ENCODE measurements at regions of chr1 and their contacts with region 1.

Region 1: DNA sequence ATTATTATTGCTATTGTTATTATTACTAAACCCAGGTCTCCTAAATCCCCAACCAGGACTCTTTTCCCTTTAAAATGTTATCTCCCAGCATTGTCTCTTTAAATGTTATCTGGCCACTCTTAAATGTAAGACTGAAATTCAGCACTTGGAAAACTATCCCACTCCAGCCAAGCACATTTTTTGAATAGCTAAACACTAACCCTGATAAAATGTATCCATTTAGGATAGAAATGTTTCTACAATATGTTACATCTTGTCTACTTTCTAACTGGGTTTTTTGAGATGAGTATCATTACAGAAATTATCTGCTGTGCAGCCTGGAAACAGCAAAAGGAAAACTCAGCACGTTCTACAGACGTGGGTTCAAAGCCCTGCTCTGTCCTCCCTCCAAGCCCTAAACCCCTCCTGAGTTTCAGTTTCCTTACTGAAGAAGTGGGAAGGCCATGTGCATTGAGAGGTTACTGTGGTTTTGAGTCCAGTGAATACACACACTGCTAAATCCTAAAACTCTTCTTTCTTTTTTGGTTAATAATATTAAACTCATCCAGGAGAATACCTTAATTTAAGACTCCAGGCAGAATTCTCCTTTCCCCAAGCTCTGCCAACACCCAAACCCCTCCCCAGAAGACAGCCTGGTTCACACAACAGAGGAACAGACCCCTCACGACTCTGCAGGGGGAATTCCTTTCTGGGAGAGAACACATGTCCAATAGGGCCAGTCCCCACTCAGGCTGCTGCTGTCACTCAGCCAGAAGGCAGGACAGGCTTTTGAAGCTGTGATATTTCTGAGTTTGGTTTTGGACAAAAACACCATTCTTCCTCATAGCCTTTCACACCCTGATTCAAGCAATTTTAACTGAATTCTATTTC is 41.9 kb downstream of the HIVEP3 start:
- DNase-seq: no peak
- ATAC-seq: peak; percentile 13 to 48

Region 2: GRCh38 chr1:41842993-41843755 is 33.6 kb before region 1 on chr1:
- intact Hi-C with region 1: loop called in 1 of 2 experiments (anchors 5 kb)
- DNase-seq: no peak
- ATAC-seq: peak in 1 of 2 donors; percentile 48